OCI-LY7 (cell line): ENCODE measurements at regions of chr1 and their contacts with region 1.

Region 1: GRCh38 chr1:200168926-200169325 is 141.4 kb downstream of the NR5A2 start:
- DNase-seq: no peak
- H3K4me3 ChIP-seq: no peak overlapping the region
- H3K27ac ChIP-seq: no peak overlapping the region
- H3K4me1 ChIP-seq: peaks cover 20% of the 10 kb centered on the region
- CTCF ChIP-seq: no peak

Region 2: GRCh38 chr1:200154069-200154767 is 14.7 kb before region 1 on chr1:
- CTCF ChIA-PET with region 1: interaction called, 4 read pairs
- POLR2A ChIA-PET with region 1: interaction called, 13 read pairs
- intact Hi-C with region 1: no loop called
- DNase-seq: peak; percentile 93
- H3K4me3 ChIP-seq: peak overlapping the region; percentile 41
- H3K27ac ChIP-seq: peak overlapping the region; percentile 89
- H3K4me1 ChIP-seq: peaks cover 56% of the 10 kb centered on the region
- CTCF ChIP-seq: no peak